ENCODE measurements at regions of chr17 and their contacts with region 1.

Region 1: DNA sequence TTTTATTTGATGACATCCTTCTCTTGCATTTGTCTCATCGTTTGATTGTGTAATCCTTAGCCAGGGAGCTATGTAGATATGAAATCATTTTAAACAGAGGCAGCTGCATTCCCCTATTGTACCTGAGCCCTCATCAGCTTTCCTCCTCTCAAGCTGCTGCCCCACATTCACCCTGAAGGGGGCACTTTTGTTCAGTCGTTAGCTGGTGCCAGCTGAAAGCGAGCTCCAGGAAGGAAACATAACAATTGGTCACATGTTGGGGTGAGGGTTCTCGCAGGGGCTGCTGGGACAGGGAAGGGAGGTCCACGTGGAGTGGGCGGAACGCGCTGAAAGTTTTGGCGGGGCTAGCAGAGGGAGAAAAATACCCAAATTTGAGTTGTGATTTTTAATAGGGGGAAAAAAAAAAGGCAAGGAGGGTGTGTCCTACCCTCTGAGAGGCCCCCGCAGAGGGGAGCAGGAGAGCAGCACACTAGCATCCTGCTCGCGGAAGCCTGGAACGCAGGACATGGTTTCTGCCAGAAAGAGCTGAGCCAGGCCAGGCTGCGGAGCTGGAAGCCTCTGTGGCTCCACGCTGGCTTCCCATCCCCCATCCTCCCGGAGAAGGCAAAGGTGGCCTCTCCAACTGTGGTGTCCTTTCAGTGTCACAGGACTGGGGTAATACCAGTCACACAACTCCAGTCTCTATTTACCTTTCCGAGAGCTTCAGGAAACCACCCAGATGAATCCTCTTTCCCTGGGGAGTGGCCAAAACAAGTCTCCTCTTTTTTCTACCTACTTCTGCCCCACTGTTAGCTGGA is 8.5 kb upstream of the MSL1 start:
- DNase-seq: peak; percentile 96
- H3K4me3 Mint-ChIP-seq: peak overlapping the region; percentile 80
- H3K27ac Mint-ChIP-seq: peak overlapping the region; percentile 92
- H3K4me1 Mint-ChIP-seq: peaks cover 49% of the 10 kb centered on the region
- H3K27me3 Mint-ChIP-seq: no peaks in the 10 kb centered on the region

Region 2: GRCh38 chr17:39835038-39835786 is 278.1 kb before region 1 on chr17:
- CTCF ChIA-PET with region 1: no interaction called
- POLR2A ChIA-PET with region 1: no interaction called
- intact Hi-C with region 1: no loop called
- DNase-seq: no peak
- H3K4me3 Mint-ChIP-seq: no peak overlapping the region
- H3K27ac Mint-ChIP-seq: peak overlapping the region; percentile 9
- H3K4me1 Mint-ChIP-seq: peaks cover 26% of the 10 kb centered on the region
- H3K27me3 Mint-ChIP-seq: no peaks in the 10 kb centered on the region

Region 3: DNA sequence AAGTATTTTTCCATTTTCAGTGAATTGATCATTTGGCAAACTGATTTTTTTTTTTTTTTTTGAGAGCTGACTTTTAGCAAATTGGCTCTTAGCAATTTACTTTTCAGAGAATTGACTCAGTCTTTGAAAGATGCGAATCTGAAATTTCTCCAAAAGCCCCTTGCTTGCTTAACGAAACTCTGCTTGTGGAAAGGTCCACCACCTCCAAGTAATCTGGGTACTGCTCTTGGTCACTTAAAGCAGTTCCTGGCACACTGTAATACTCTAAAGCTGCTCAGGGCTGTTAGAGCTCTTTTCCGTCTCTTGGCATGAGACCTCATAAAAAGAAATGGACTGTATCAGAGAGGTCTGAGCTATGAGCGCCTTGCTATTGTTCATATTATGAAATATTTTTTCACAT is 197.7 kb before region 1 on chr17:
- CTCF ChIA-PET with region 1: no interaction called
- POLR2A ChIA-PET with region 1: no interaction called
- intact Hi-C with region 1: no loop called
- DNase-seq: no peak
- H3K4me3 Mint-ChIP-seq: no peak overlapping the region
- H3K27ac Mint-ChIP-seq: peak overlapping the region; percentile 11
- H3K4me1 Mint-ChIP-seq: peaks cover 30% of the 10 kb centered on the region
- H3K27me3 Mint-ChIP-seq: no peaks in the 10 kb centered on the region

Region 4: DNA sequence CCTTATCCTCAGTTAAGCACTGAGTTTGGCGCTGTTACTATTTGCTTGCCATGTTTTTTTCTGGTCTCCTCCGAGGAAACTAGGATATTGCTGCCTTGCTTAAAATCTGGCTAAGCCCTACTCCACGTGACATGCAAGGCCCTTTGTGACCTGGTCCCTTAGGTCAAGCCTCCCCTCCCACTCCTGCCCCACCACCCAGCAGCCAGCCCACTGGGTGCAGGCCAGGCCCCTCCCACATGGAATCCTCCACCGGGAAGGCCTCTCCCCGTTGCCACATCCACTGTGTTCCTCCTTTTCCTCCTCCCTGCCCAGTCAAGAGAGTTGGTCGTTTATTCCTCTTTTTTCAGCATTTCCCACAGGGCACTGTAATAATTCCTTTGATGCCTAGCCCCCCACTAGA is 116.5 kb before region 1 on chr17:
- CTCF ChIA-PET with region 1: no interaction called
- POLR2A ChIA-PET with region 1: no interaction called
- intact Hi-C with region 1: no loop called
- DNase-seq: no peak
- H3K4me3 Mint-ChIP-seq: no peak overlapping the region
- H3K27ac Mint-ChIP-seq: no peak overlapping the region
- H3K4me1 Mint-ChIP-seq: peaks cover 5% of the 10 kb centered on the region
- H3K27me3 Mint-ChIP-seq: no peaks in the 10 kb centered on the region

Region 5: DNA sequence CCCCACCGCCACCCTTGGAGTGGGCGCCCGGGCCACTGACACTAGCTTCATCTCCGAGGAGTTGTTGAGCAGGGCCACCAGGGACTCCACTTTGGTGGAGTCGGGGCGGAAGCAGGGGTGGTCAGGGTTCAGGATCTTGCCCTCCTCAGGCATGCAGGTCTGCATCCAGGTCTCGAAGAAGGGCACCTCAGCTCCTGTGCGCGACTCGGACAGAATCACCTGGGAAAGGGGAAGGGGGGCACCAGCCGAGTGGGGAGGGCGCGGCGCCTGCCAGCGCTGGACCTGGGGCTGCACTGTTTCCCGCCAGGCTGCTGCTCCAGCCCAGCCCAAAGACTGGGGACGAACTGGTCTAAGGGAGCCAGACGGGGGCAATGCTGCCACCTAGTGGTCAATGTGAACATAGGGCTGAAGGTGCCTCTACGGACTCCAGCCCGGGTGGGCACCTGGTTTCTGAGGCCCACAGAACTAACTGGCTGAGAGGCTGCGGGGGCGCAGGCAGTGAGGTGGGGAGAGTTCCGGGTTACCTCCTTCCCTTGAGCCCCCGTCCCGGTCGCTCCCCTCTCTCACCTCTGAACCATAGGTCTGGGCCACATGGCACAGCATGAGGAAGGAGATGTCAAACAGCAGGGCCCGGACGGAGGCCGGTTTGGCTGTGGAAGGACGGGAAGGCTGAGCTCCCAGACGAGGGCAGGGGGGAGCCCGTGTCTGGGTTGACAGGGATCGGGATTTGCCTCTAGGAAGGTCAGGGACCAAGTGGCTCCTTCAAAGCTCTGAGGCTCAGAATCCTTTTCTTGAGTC is 86.3 kb before region 1 on chr17:
- CTCF ChIA-PET with region 1: interaction called, 47 read pairs
- POLR2A ChIA-PET with region 1: no interaction called
- intact Hi-C with region 1: loop called (anchors 5 kb)
- DNase-seq: peak; percentile 82
- H3K4me3 Mint-ChIP-seq: no peak overlapping the region
- H3K27ac Mint-ChIP-seq: no peak overlapping the region
- H3K4me1 Mint-ChIP-seq: peaks cover 21% of the 10 kb centered on the region
- H3K27me3 Mint-ChIP-seq: no peaks in the 10 kb centered on the region

Region 6: DNA sequence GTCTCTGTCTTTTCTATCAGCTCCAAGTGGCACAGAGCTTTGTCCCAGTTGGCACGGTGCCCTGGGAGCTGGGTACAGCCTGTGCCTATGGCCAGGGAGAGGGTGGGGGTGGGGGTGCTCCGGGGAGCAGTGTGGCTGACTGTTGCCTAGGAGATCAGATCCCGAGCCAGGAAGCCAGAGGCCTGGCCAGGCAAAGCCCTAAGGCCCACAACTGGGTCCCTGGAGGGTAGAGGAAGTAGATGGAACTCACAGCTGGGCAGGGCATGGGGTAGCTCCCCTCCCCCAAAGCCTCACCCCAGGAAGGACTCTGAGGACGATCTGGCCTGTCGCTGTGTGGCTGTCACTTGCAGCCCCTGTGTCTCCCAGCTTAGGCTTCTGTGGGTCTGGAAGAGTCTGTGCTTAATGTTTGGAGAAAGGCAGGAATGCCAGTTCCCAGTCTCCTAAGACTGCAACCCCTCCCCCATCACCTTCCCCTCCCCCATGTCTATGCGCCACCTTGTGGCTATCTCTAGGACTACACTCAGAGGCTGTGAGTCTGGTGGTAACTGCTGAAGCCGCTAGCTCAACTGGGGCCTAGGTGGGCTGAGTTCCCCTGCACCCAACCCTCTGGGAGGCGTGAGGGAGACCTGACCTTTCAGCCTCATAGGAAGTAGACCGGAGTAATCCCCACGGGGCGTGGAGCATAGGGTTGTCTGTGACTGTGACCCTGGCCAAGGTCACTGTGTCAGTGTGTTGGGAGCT is 37.9 kb before region 1 on chr17:
- CTCF ChIA-PET with region 1: interaction called, 48 read pairs
- POLR2A ChIA-PET with region 1: no interaction called
- intact Hi-C with region 1: no loop called
- DNase-seq: peak; percentile 80
- H3K4me3 Mint-ChIP-seq: no peak overlapping the region
- H3K27ac Mint-ChIP-seq: peak overlapping the region; percentile 34
- H3K4me1 Mint-ChIP-seq: peaks cover 19% of the 10 kb centered on the region
- H3K27me3 Mint-ChIP-seq: no peaks in the 10 kb centered on the region

Region 7: GRCh38 chr17:40130352-40131042 is 17.2 kb after region 1 on chr17:
- CTCF ChIA-PET with region 1: interaction called, 74 read pairs
- POLR2A ChIA-PET with region 1: no interaction called
- intact Hi-C with region 1: no loop called
- DNase-seq: no peak
- H3K4me3 Mint-ChIP-seq: no peak overlapping the region
- H3K27ac Mint-ChIP-seq: peak overlapping the region; percentile 32
- H3K4me1 Mint-ChIP-seq: peaks cover 4% of the 10 kb centered on the region
- H3K27me3 Mint-ChIP-seq: no peaks in the 10 kb centered on the region

Region 8: GRCh38 chr17:40168262-40168832 is 55.0 kb after region 1 on chr17:
- CTCF ChIA-PET with region 1: interaction called, 126 read pairs
- POLR2A ChIA-PET with region 1: interaction called, 5 read pairs
- intact Hi-C with region 1: loop called (anchors 1 kb)
- DNase-seq: peak; percentile 34
- H3K4me3 Mint-ChIP-seq: no peak overlapping the region
- H3K27ac Mint-ChIP-seq: peak overlapping the region; percentile 1
- H3K4me1 Mint-ChIP-seq: peaks cover 3% of the 10 kb centered on the region
- H3K27me3 Mint-ChIP-seq: no peaks in the 10 kb centered on the region

Region 9: GRCh38 chr17:40219073-40219860 is 106.0 kb after region 1 on chr17 and contains the start of gene WIPF2:
- CTCF ChIA-PET with region 1: interaction called, 10 read pairs
- POLR2A ChIA-PET with region 1: interaction called, 5 read pairs
- intact Hi-C with region 1: no loop called
- DNase-seq: peak; percentile 99
- H3K4me3 Mint-ChIP-seq: peak within 1 kb of the TSS; percentile 86
- H3K27ac Mint-ChIP-seq: peak within 1 kb of the TSS; percentile 92
- H3K4me1 Mint-ChIP-seq: peaks cover 27% of the 10 kb centered on the region
- H3K27me3 Mint-ChIP-seq: no peaks in the 10 kb centered on the region
- total RNA-seq, gene WIPF2: 19.0 to 20.6 TPM